Activated naive CD4-positive, alpha-beta T cell treated with anti-CD3 and anti-CD28 coated beads, Interleukin-2, amount 10 ng/mL, durations not matched to agents 7 days and 5 days (primary cell): ENCODE measurements at regions of chr10 and their contacts with region 1.

Region 1: GRCh38 chr10:48656241-48656913 is 28.3 kb upstream of the WDFY4 start:
- DNase-seq: peak; percentile 92
- H3K4me3 Mint-ChIP-seq: peak overlapping the region; percentile 66
- H3K27ac Mint-ChIP-seq: peak overlapping the region; percentile 38
- H3K4me1 Mint-ChIP-seq: peaks cover 14% of the 10 kb centered on the region
- H3K27me3 Mint-ChIP-seq: peaks cover 67% of the 10 kb centered on the region

Region 2: DNA sequence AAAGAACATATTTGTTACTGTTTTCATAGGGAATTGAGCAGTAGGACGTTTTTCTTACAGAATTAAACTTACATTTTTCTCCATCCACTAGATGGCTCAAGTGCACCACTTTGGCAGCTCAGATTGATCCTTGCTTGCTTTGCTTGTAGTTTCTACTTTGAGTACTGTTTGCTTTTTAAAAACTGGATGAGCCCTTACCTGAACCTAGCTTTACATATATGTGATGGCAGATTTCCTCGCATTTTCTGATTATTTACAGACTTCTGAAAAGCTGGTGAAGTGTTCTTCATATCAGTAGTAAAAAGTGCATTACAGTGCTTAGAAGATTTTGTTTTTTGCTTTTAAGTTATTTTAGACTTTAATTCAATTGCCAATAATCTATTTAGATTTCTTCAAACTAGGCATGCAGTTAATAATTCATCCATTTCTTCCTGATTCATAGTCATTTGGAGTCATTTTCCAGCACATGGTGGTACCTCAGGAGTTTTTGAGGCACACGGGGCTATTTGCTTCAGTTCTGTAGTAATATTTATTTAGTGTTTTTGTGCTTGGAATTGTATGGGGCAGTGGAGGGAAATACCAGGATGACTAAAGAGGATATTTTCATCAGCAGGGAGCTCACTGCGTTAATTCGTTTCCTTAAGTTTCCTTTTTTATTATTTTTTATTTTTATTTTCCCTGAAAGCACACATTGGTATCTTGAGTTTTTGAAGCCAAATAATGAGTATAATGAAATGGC is 292.6 kb before region 1 on chr10:
- CTCF ChIA-PET with region 1: interaction called, 48 read pairs
- DNase-seq: peak; percentile 42
- H3K4me3 Mint-ChIP-seq: no peak overlapping the region
- H3K27ac Mint-ChIP-seq: no peak overlapping the region
- H3K4me1 Mint-ChIP-seq: peaks cover 2% of the 10 kb centered on the region
- H3K27me3 Mint-ChIP-seq: no peaks in the 10 kb centered on the region

Region 3: GRCh38 chr10:48608279-48608681 is 48.1 kb before region 1 on chr10:
- CTCF ChIA-PET with region 1: interaction called, 42 read pairs
- DNase-seq: peak; percentile 50
- H3K4me3 Mint-ChIP-seq: no peak overlapping the region
- H3K27ac Mint-ChIP-seq: no peak overlapping the region
- H3K4me1 Mint-ChIP-seq: no peaks in the 10 kb centered on the region
- H3K27me3 Mint-ChIP-seq: peaks cover 54% of the 10 kb centered on the region

Region 4: GRCh38 chr10:49164559-49165188 is 508.3 kb after region 1 on chr10:
- CTCF ChIA-PET with region 1: interaction called, 40 read pairs
- DNase-seq: peak; percentile 67
- H3K4me3 Mint-ChIP-seq: no peak overlapping the region
- H3K27ac Mint-ChIP-seq: no peak overlapping the region
- H3K4me1 Mint-ChIP-seq: peaks cover 12% of the 10 kb centered on the region
- H3K27me3 Mint-ChIP-seq: no peaks in the 10 kb centered on the region

Region 5: GRCh38 chr10:49512121-49512809 is 855.9 kb after region 1 on chr10:
- CTCF ChIA-PET with region 1: interaction called, 32 read pairs
- DNase-seq: peak; percentile 34
- H3K4me3 Mint-ChIP-seq: no peak overlapping the region
- H3K27ac Mint-ChIP-seq: no peak overlapping the region
- H3K4me1 Mint-ChIP-seq: peaks cover 22% of the 10 kb centered on the region
- H3K27me3 Mint-ChIP-seq: peaks cover 26% of the 10 kb centered on the region